Esophagus muscularis mucosa (tissue), 4 donors: ENCODE measurements at regions of chr1 and their contacts with region 1.

Region 1: DNA sequence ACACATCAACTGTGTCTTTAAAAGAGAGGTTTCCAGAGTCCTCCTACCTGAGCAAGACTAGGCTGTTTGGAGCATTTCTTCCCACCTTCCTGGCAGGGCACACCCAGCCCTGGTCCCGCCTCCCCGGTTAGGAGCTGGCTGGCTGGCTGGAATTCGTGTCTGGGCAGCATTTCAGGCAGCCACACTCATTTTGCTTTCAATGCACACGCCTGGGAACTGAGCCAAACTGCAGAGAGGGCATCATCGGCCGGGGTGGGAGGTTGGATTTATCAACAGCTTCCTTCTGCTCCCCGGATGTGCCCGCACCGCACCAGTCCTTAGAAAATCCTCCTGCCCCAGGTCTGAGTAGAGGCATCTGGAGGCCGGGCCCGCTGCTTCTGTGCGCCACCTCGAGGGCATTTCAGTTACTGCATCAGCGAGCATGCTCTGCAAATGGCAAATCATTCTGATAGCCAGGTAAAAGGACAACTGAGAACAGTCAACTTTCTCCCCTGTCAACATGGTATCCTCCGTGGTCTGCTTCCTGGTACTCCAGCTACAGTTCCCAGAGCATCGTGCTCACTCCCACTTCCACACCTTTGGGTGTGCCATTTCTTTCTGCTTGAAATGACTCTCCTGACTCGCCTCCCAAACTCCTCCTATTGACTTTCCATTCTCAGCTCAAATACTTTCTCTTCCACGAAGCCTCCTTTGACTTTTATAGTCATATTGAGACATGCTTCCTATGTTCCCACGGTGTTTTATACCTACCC is 20.6 kb downstream of the TCEA3 start:
- DNase-seq: peak; percentile 97
- H3K4me3 ChIP-seq: peak overlapping the region in 3 of 4 donors; percentile 27 to 42 (median 35)
- H3K27ac ChIP-seq: peak overlapping the region; percentile 54 to 75 (median 66)
- H3K4me1 ChIP-seq: peaks cover 31 to 49% (median 45%) of the 10 kb centered on the region in 4 donors
- H3K27me3 ChIP-seq: no peaks in the 10 kb centered on the region
- CTCF ChIP-seq: peak in 2 of 3 experiments; percentile 95 to 97
- EP300 ChIP-seq: no peak
- POLR2A ChIP-seq: no peak

Region 2: DNA sequence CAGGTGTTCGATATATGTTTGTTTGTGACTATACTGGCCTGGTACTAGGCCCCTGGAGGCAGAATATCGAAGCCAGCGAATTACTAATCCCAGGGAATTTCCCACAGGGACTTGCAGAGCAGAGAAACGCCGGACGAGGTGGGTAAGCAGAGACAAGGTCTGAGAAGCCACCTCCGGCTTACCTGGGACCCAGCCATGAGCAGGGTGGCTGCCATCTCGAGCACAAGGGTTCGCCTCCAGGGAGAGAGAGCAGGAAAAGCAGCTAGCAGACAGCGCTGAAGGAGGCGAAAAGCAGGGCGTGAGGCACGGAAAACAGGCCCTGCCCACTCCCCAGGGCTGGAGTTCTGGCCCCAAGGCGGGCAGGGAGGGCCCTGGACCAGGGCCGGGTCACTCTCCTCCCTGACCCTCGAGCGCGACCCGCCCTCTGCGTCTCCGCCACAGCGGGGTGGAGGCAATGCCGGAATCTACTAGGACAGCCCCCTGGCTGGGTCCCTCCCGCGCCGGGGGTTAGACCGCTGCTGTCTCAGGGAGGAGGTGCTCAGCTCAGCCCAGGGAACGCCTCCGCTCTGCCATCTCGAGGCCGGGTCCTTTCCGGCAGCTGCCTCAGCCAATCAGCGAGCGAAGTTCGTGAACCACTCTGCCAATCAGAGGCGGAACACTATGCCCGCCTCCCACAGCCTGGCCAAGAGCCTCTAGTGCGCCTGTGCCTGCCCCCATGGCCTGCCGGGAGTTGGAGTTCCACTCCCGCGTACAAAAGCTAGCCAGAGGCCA is 35.9 kb before region 1 on chr1:
- intact Hi-C with region 1: loop called (anchors 5 kb)
- DNase-seq: peak; percentile 99
- H3K4me3 ChIP-seq: peak overlapping the region; percentile 70 to 84 (median 80)
- H3K27ac ChIP-seq: peak overlapping the region; percentile 90 to 99 (median 96)
- H3K4me1 ChIP-seq: peaks cover 37 to 60% (median 52%) of the 10 kb centered on the region in 4 donors
- H3K27me3 ChIP-seq: no peaks in the 10 kb centered on the region
- CTCF ChIP-seq: peak in 1 of 3 experiments; percentile 9
- EP300 ChIP-seq: no peak
- POLR2A ChIP-seq: peak; percentile 59

Region 3: DNA sequence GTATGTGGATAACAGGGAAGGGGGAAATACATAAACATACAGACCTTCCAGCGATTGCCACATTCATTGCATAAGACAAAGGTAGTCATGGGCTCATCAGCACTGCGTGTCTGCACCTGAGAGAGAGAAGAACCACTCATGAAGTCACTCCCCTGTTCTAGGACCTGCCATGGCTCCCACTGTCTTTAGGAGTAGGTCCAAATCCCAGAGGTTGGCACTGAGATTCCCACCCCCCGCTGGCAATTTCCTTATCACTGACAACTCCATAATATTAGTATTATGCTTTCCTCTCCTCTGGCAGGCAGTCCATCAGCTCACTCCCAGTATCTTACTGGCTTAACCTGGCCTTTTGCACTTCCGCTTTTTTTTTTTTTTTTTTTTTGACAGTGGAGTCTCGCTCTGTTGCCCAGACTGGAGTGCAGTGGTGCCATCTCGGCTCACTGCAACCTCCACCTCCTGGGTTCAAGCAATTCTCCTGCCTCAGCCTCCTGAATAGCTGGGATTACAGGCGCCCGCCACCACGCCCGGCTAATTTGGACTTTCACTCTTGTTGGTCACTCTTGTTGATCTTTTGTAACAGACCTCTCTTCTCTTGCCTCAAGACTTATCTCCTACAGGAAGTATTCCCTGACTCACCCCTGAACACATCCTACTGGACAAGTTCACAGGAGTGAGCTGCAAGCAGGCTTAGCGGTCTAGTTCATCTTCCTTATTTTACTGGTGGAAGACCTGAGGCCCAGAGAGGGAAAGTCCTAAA is 19.4 kb before region 1 on chr1:
- intact Hi-C with region 1: no loop called
- DNase-seq: no peak
- H3K4me3 ChIP-seq: no peak overlapping the region
- H3K27ac ChIP-seq: peak overlapping the region in 2 of 4 donors; percentile 27 to 31
- H3K4me1 ChIP-seq: peaks cover 14 to 22% (median 19%) of the 10 kb centered on the region in 4 donors
- H3K27me3 ChIP-seq: no peaks in the 10 kb centered on the region
- CTCF ChIP-seq: no peak
- EP300 ChIP-seq: no peak
- POLR2A ChIP-seq: no peak

Region 4: DNA sequence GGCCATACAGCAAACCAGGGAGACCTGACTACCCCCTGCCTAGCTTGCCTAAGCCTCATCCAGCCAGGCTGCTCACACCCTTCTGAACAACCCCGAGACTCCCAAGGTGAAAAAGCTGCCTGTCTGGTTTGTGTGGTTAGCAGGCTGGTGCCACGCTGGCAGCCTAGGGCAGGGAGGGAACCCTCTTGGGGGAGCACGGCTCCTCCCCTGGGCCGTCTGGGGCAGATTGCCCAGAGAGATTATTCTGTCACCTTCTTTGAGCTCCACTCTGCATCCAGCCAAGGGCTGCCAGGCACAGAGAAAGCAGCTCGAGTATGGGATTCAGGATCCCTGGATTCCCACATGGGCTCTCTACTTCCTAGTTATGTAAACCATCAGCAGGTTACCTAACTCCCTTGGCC is 48.1 kb after region 1 on chr1:
- intact Hi-C with region 1: no loop called
- DNase-seq: no peak
- H3K4me3 ChIP-seq: no peak overlapping the region
- H3K27ac ChIP-seq: peak overlapping the region; percentile 11 to 61 (median 52)
- H3K4me1 ChIP-seq: peaks cover 10 to 39% (median 21%) of the 10 kb centered on the region in 4 donors
- H3K27me3 ChIP-seq: no peaks in the 10 kb centered on the region
- CTCF ChIP-seq: no peak
- EP300 ChIP-seq: no peak
- POLR2A ChIP-seq: no peak